SK-N-SH (cell line): ENCODE measurements at regions of chr7 and their contacts with region 1.

Region 1: DNA sequence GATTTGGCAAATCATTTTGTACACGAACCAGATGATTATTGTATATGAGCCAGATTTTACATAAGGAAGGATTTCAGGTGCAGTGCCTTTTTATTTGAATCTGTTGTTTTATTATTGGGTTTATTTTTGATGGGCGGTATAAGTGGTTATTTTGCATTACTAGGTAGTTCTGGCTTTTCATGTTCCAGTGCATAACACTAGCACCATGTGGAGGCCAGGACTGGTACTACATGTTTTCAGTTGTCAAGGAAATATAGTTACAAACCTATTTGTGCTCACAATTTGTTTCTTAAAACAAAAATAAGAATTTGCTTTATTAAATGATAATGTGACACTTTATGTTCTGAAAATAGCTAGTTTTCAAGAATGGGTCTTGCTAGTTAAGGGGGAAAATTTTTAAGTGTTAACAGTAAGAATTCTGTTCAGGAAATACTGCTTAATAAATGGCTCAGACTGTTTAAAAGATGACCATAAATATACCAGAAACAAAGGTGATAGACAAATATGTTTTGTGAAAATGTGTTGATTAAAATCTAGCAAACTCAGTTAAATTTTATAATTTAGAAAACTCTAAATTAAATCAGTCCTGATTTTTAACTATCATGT is 7.1 kb upstream of the SEMA3E start:
- DNase-seq: peak; percentile 61
- H3K4me3 ChIP-seq: no peak overlapping the region; a peak in 1 of 4 replicates
- H3K27ac ChIP-seq: no peak overlapping the region
- H3K4me1 ChIP-seq: no peaks in the 10 kb centered on the region; a peak in 1 of 4 replicates
- H3K27me3 ChIP-seq: no peaks in the 10 kb centered on the region
- CTCF ChIP-seq: peak; percentile 100
- EP300 ChIP-seq: no peak
- RAD21 ChIP-seq: peak; percentile 100

Region 2: GRCh38 chr7:83410989-83411591 is 245.0 kb before region 1 on chr7:
- CTCF ChIA-PET with region 1: interaction called, 21 read pairs
- POLR2A ChIA-PET with region 1: no interaction called
- DNase-seq: peak; percentile 38
- H3K4me3 ChIP-seq: no peak overlapping the region
- H3K27ac ChIP-seq: no peak overlapping the region
- H3K4me1 ChIP-seq: peaks cover 0 to 6% of the 10 kb centered on the region in 2 experiments; a peak in 2 of 4 replicates
- H3K27me3 ChIP-seq: no peaks in the 10 kb centered on the region
- CTCF ChIP-seq: peak; percentile 95
- EP300 ChIP-seq: no peak
- RAD21 ChIP-seq: peak; percentile 94

Region 3: DNA sequence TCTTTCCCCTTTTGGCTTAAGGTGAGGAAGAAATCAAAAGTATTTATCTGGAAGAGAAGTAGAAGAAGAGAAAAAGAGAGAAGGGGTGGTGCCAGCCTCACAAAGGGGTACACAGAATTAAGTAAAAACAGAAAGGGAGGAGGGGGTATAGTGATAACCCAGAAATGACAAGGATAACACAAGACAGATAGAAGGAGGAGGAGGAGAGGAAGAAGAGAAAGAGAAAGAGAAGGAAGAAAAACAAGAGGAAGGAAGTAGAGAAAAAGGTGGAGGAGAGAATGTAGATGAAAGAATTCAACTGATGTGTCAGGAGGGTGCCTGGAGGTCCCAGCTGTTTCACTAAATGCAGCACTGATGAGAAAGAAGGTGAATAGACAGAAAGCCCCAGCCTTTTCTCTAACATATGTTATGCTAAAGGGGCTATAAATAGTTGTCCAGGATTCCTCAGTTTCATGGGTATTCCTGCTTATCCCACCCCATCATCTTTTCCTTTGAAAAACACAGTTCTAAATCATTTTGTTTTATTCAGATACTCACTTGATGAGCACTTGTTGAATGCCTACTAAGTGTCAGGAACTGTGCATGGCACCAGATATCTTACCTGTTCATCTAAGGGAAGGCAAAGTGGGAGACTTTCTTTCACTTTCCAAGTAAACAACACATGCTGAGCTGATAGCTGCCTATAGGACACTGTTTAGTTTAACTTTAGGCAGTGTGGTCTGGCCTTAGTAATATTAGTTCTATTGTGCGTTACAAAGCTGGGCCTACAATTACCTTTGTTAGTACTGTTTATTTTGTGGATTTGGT is 15.1 kb before region 1 on chr7:
- CTCF ChIA-PET with region 1: interaction called, 11 read pairs
- POLR2A ChIA-PET with region 1: no interaction called
- DNase-seq: no peak
- H3K4me3 ChIP-seq: no peak overlapping the region
- H3K27ac ChIP-seq: no peak overlapping the region
- H3K4me1 ChIP-seq: no peaks in the 10 kb centered on the region; a peak in 1 of 4 replicates
- H3K27me3 ChIP-seq: no peaks in the 10 kb centered on the region
- CTCF ChIP-seq: no peak
- EP300 ChIP-seq: no peak
- RAD21 ChIP-seq: no peak

Region 4: DNA sequence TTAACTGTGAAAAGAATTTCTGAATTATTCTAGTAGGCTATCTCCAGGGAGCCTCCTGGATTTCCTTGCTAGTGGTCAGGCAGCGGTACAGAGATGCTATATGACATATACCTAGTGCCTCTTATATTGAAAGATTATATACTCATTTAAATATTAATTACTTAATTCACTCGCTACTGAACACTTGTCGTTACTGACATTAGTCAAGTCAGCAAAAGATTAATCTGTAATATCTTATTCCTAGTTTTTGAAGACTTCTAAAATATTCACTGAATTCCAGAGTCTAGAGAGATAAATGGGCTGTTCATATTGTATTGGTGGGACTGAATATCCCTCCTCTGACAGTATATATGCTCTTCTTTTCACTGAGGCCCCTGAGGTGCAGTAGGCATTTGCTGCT is 10.0 kb before region 1 on chr7:
- CTCF ChIA-PET with region 1: interaction called, 11 read pairs
- POLR2A ChIA-PET with region 1: no interaction called
- DNase-seq: no peak
- H3K4me3 ChIP-seq: no peak overlapping the region
- H3K27ac ChIP-seq: no peak overlapping the region
- H3K4me1 ChIP-seq: peaks cover 0 to 6% of the 10 kb centered on the region in 2 experiments; a peak in 2 of 4 replicates
- H3K27me3 ChIP-seq: no peaks in the 10 kb centered on the region
- CTCF ChIP-seq: no peak
- EP300 ChIP-seq: no peak
- RAD21 ChIP-seq: no peak

Region 5: GRCh38 chr7:83672157-83672556 is 16.1 kb after region 1 on chr7:
- CTCF ChIA-PET with region 1: interaction called, 11 read pairs
- POLR2A ChIA-PET with region 1: no interaction called
- DNase-seq: no peak
- H3K4me3 ChIP-seq: no peak overlapping the region
- H3K27ac ChIP-seq: no peak overlapping the region
- H3K4me1 ChIP-seq: peaks cover 0 to 5% of the 10 kb centered on the region in 2 experiments; a peak in 3 of 4 replicates
- H3K27me3 ChIP-seq: no peaks in the 10 kb centered on the region
- CTCF ChIP-seq: no peak
- EP300 ChIP-seq: no peak
- RAD21 ChIP-seq: no peak

Region 6: GRCh38 chr7:83677180-83677866 is 21.3 kb after region 1 on chr7:
- CTCF ChIA-PET with region 1: interaction called, 11 read pairs
- POLR2A ChIA-PET with region 1: no interaction called
- DNase-seq: peak; percentile 24
- H3K4me3 ChIP-seq: no peak overlapping the region
- H3K27ac ChIP-seq: peak overlapping the region in 1 of 2 experiments; percentile 18; a peak in 1 of 4 replicates
- H3K4me1 ChIP-seq: peaks cover 0 to 8% of the 10 kb centered on the region in 2 experiments; a peak in 3 of 4 replicates
- H3K27me3 ChIP-seq: no peaks in the 10 kb centered on the region
- CTCF ChIP-seq: no peak
- EP300 ChIP-seq: peak in 1 of 2 experiments; percentile 68; a peak in 1 of 4 replicates
- RAD21 ChIP-seq: no peak

Region 7: GRCh38 chr7:83701736-83702135 is 45.7 kb after region 1 on chr7:
- CTCF ChIA-PET with region 1: no interaction called
- POLR2A ChIA-PET with region 1: no interaction called
- DNase-seq: no peak
- H3K4me3 ChIP-seq: no peak overlapping the region
- H3K27ac ChIP-seq: no peak overlapping the region
- H3K4me1 ChIP-seq: peaks cover 0 to 6% of the 10 kb centered on the region in 2 experiments; a peak in 1 of 4 replicates
- H3K27me3 ChIP-seq: no peaks in the 10 kb centered on the region
- CTCF ChIP-seq: no peak
- EP300 ChIP-seq: no peak
- RAD21 ChIP-seq: no peak

Region 8: GRCh38 chr7:83769407-83769806 is 113.4 kb after region 1 on chr7:
- CTCF ChIA-PET with region 1: no interaction called
- POLR2A ChIA-PET with region 1: no interaction called
- DNase-seq: no peak
- H3K4me3 ChIP-seq: no peak overlapping the region
- H3K27ac ChIP-seq: no peak overlapping the region
- H3K4me1 ChIP-seq: no peaks in the 10 kb centered on the region
- H3K27me3 ChIP-seq: no peaks in the 10 kb centered on the region
- CTCF ChIP-seq: no peak
- EP300 ChIP-seq: no peak
- RAD21 ChIP-seq: no peak